Naive thymus-derived CD4-positive, alpha-beta T cell (primary cell): ENCODE measurements at regions of chr19 and their contacts with region 1.

Region 1: DNA sequence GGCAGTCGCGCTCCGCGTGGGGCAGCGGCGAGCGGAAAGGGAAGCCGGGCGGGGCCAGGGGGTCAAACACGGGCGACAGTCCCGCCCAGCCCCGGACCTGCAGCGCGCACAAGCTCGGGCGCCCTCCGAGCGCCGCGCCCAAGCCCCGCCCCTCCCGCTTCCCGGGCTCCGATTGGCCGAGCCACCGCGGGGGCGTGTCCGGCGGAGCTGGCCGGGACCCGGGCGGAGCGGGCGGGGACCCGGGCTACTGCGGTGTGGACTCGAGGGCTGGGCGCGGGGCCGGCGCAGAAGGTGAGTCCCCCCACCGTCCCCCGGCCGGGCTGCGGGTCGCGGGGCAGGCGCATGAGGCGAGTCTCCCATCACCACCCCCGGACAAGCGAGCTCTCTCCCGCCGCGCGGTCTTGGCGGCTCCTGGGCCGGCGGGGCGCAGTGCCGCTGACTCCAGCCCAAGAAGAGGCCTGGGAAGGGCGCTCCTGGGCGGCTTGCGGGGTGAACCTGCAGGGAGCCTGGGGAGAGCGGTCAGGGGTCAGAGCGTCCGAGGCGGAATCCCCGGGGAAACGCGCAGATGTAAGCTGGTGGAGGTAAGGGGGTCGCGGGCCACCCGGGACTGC is at the start of gene PLEKHF1:
- DNase-seq: peak; percentile 66 to 99 (median 79)
- ATAC-seq: peak; percentile 86
- H3K4me3 ChIP-seq: peak within 1 kb of the TSS; percentile 62
- H3K4me3 Mint-ChIP-seq: peak within 1 kb of the TSS; percentile 89 to 98 (median 93)
- H3K27ac ChIP-seq: peak within 1 kb of the TSS; percentile 94
- H3K27ac Mint-ChIP-seq: peak within 1 kb of the TSS; percentile 88 to 100 (median 97)
- H3K4me1 ChIP-seq: peaks cover 33 to 55% of the 10 kb centered on the region in 2 donors
- H3K4me1 Mint-ChIP-seq: peaks cover 36 to 80% (median 71%) of the 10 kb centered on the region in 7 donors
- H3K27me3 ChIP-seq: no peaks in the 10 kb centered on the region
- H3K27me3 Mint-ChIP-seq: no peaks in the 10 kb centered on the region
- total RNA-seq, gene PLEKHF1: 11.1 to 47.2 (median 17.5) TPM

Region 2: DNA sequence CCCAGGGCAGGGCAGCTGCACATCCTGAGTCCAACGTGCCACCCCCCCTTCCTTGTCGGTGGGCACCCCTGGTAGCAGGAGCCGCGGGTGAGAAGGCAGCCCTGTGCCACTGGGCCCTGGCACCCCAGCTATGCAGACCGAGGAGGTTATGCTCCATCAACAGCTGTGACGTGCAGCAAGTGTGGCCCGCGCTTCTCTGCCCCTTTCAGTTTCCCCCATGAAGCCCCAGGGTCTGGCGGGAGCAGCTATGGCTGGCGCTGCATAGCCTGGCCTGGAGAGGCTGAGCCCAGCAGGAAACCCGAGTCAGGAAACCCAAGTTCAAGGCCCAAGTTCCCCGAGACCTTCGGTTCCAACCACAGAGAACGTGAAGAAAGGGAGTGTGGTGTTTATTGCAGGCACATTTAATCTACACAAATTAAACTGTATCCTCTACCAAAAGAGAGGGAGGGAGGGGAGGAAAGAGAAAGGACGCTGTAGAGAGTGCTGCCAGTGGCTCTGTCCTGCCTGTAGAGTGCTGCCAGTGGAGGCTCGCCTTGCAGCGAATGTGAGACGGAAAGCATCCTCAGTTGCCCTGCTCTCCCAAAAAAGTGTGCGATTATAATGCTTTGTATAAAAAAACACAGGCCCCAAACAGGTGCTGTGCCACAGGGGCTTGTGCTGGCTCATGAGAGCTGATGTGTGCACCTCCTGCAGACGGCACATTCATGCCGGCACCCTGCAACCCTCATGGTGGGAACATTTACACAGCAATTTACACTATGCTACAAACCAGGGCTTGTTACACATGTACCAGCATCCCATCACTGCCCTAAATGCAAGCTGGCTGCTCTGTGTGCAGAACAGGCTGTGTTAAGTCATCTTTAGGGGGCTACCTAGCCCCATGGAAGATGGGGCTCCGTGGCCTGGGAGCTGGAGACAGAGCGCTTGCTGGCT is 42.9 kb before region 1 on chr19:
- CTCF ChIA-PET with region 1: interaction called, 23 read pairs
- POLR2A ChIA-PET with region 1: interaction called, 6 read pairs
- intact Hi-C with region 1: no loop called
- DNase-seq: peak in 6 of 9 donors; percentile 4 to 32 (median 25)
- ATAC-seq: peak; percentile 70
- H3K4me3 ChIP-seq: peak overlapping the region; percentile 21
- H3K4me3 Mint-ChIP-seq: peak overlapping the region; percentile 1 to 85 (median 70)
- H3K27ac ChIP-seq: no peak overlapping the region
- H3K27ac Mint-ChIP-seq: peak overlapping the region; percentile 13 to 87 (median 76)
- H3K4me1 ChIP-seq: peaks cover 28 to 58% of the 10 kb centered on the region in 2 donors
- H3K4me1 Mint-ChIP-seq: peaks cover 37 to 53% (median 45%) of the 10 kb centered on the region in 7 donors
- H3K27me3 ChIP-seq: no peaks in the 10 kb centered on the region
- H3K27me3 Mint-ChIP-seq: peaks cover 0 to 3% (median 0%) of the 10 kb centered on the region in 5 donors

Region 3: GRCh38 chr19:29645911-29646310 is 19.4 kb before region 1 on chr19:
- CTCF ChIA-PET with region 1: interaction called, 4 read pairs
- POLR2A ChIA-PET with region 1: interaction called, 5 read pairs
- intact Hi-C with region 1: loop called in 1 of 2 experiments (anchors 2 kb)
- DNase-seq: no peak
- ATAC-seq: no peak
- H3K4me3 ChIP-seq: no peak overlapping the region
- H3K4me3 Mint-ChIP-seq: peak overlapping the region in 8 of 10 donors; percentile 17 to 69 (median 59)
- H3K27ac ChIP-seq: no peak overlapping the region
- H3K27ac Mint-ChIP-seq: peak overlapping the region in 8 of 9 donors; percentile 25 to 82 (median 50)
- H3K4me1 ChIP-seq: peaks cover 0 to 12% of the 10 kb centered on the region in 2 donors
- H3K4me1 Mint-ChIP-seq: peaks cover 15 to 22% (median 19%) of the 10 kb centered on the region in 7 donors
- H3K27me3 ChIP-seq: no peaks in the 10 kb centered on the region
- H3K27me3 Mint-ChIP-seq: peaks cover 0 to 6% (median 0%) of the 10 kb centered on the region in 5 donors

Region 4: GRCh38 chr19:29680447-29680846 is 15.1 kb after region 1 on chr19:
- CTCF ChIA-PET with region 1: interaction called, 21 read pairs
- POLR2A ChIA-PET with region 1: interaction called, 150 read pairs
- intact Hi-C with region 1: loop called (anchors 2 kb)
- DNase-seq: peak; percentile 55 to 83 (median 78)
- ATAC-seq: peak; percentile 93
- H3K4me3 ChIP-seq: peak overlapping the region; percentile 56
- H3K4me3 Mint-ChIP-seq: peak overlapping the region; percentile 62 to 85 (median 77)
- H3K27ac ChIP-seq: peak overlapping the region; percentile 67
- H3K27ac Mint-ChIP-seq: peak overlapping the region; percentile 84 to 93 (median 91)
- H3K4me1 ChIP-seq: peaks cover 69 to 73% of the 10 kb centered on the region in 2 donors
- H3K4me1 Mint-ChIP-seq: peaks cover 41 to 89% (median 60%) of the 10 kb centered on the region in 7 donors
- H3K27me3 ChIP-seq: no peaks in the 10 kb centered on the region
- H3K27me3 Mint-ChIP-seq: no peaks in the 10 kb centered on the region